ENCODE measurements at regions of chr18 and their contacts with region 1.

Region 1: DNA sequence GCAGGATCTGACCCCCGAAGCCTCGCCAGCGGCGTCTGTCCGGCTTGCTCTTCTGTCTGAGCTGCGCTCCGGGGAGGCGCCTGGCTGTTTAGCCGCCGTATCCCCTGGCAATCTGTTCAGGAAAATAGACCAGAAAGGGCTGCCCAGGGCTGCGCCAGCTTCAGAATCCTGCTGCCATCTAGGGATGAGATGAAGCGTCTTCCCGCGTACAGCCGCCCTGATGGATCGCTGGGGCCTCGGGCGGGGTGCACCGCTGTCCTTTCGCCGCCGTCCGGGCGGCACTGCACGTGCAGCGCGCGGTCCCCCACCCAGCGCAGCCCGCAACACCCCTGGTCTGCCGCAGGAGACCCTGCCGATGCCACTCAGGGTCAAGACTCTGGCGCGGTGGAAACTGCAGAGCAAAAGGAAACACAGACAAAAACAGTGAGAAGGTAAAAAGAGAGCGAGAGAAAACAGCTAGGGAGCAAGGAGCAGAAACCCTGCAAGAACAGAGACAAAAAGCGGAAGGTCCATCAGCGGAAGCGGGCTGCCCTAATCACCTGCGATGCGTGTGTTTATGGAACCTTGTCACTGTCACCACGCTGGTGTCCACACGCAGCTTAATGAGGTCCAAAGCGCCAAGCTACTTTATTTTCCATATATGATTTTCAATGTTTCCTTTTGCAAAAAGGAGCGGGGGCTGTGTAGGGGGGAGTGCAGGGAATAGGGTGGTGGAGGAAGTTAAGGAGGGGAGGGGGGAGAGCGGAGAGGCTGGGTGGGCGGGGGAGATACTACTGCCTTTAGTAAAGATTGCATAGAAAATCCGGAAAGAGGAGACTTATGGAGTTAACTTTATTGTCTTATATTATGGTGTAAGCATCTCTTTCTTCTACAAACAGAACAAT is 2113.3 kb upstream of the PIK3C3 start:
- DNase-seq: peak; percentile 53 to 59
- H3K4me3 ChIP-seq: peak overlapping the region; percentile 33
- H3K4me3 Mint-ChIP-seq: peak overlapping the region; percentile 91
- H3K27ac Mint-ChIP-seq: no peak overlapping the region
- H3K4me1 ChIP-seq: no peaks in the 10 kb centered on the region
- H3K4me1 Mint-ChIP-seq: peaks cover 5% of the 10 kb centered on the region
- H3K27me3 ChIP-seq: no peaks in the 10 kb centered on the region
- H3K27me3 Mint-ChIP-seq: peaks cover 4% of the 10 kb centered on the region
- CTCF ChIP-seq: peak in 1 of 2 experiments; percentile 35

Region 2: DNA sequence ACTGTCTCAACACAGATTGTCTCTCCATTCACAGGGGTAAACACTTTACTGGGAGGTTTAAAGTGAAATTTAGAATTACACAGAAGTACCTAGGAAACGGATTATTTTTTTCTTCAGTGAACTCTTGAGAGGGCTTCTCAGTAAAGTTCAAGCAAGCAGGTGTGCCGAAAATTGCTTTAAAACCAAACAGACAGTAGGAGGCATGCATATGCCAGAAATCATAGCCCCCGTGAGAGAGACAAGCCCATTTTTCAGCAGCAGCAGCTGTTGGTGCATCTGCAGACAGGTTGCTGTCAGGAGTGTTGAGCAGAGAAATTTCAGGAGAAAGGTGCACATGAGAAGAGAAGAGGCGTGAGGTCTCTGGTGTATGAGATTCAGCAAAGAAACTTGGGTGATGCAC is 160.7 kb before region 1 on chr18:
- CTCF ChIA-PET with region 1: no interaction called
- POLR2A ChIA-PET with region 1: no interaction called
- intact Hi-C with region 1: loop called (anchors 1 kb)
- DNase-seq: no peak
- H3K4me3 ChIP-seq: no peak overlapping the region
- H3K4me3 Mint-ChIP-seq: no peak overlapping the region
- H3K27ac Mint-ChIP-seq: no peak overlapping the region
- H3K4me1 ChIP-seq: no peaks in the 10 kb centered on the region
- H3K4me1 Mint-ChIP-seq: no peaks in the 10 kb centered on the region
- H3K27me3 ChIP-seq: no peaks in the 10 kb centered on the region
- H3K27me3 Mint-ChIP-seq: no peaks in the 10 kb centered on the region
- CTCF ChIP-seq: no peak

Region 3: DNA sequence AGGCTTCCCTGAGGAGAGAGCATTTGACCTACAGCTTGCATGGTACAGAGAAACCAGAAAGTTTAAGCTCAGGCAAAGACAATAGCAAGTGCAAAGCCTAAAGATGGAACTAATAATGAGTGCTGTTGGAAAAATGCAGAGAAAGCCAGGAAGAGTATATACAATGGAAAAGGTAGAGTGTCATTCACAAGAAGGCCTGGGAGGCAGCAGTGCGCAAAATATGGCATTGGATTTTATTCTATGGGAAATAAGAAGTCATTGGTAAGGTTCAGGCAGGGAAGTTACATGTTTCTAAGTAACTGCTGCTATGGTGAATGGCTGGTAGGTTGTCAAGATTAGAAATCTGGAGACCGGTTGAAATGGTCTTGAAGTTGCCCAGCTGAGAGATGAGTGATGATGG is 108.8 kb before region 1 on chr18:
- CTCF ChIA-PET with region 1: no interaction called
- POLR2A ChIA-PET with region 1: no interaction called
- intact Hi-C with region 1: loop called (anchors 10 kb)
- DNase-seq: no peak
- H3K4me3 ChIP-seq: no peak overlapping the region
- H3K4me3 Mint-ChIP-seq: no peak overlapping the region
- H3K27ac Mint-ChIP-seq: no peak overlapping the region
- H3K4me1 ChIP-seq: no peaks in the 10 kb centered on the region
- H3K4me1 Mint-ChIP-seq: no peaks in the 10 kb centered on the region
- H3K27me3 ChIP-seq: no peaks in the 10 kb centered on the region
- H3K27me3 Mint-ChIP-seq: peaks cover 2% of the 10 kb centered on the region
- CTCF ChIP-seq: no peak

Region 4: DNA sequence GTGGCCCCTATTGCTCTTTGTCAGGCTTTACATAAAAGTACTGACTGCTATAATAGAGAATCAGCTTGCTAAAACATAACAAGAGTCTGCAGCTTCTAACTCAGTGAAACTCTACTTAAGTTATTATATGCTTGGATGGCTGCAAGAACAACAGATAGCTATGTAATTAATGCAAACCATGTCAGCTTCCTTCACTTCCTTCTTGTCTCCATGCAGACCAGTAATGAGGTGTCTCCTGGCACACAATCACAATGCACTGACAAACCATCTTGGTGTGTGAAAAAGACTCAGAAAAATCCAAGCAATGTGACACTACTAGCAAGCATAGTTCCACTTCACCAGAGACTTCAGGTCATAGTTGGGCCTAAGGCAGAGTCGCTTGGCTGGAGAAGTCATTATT is 44.4 kb after region 1 on chr18:
- CTCF ChIA-PET with region 1: no interaction called
- POLR2A ChIA-PET with region 1: no interaction called
- intact Hi-C with region 1: no loop called
- DNase-seq: no peak
- H3K4me3 ChIP-seq: no peak overlapping the region
- H3K4me3 Mint-ChIP-seq: no peak overlapping the region
- H3K27ac Mint-ChIP-seq: no peak overlapping the region
- H3K4me1 ChIP-seq: no peaks in the 10 kb centered on the region
- H3K4me1 Mint-ChIP-seq: no peaks in the 10 kb centered on the region
- H3K27me3 ChIP-seq: no peaks in the 10 kb centered on the region
- H3K27me3 Mint-ChIP-seq: no peaks in the 10 kb centered on the region
- CTCF ChIP-seq: no peak